ENCODE measurements at regions of chr22 and their contacts with region 1.

Region 1: GRCh38 chr22:41596776-41597634 is 7.4 kb upstream of the PMM1 start:
- H3K4me3 ChIP-seq: no peak overlapping the region
- H3K27ac ChIP-seq: peak overlapping the region; percentile 37; the same call in 1 of the 2 replicates
- H3K4me1 ChIP-seq: no peaks in the 10 kb centered on the region; the same call in 1 of the 2 replicates
- CTCF ChIP-seq: peak; percentile 90

Region 2: DNA sequence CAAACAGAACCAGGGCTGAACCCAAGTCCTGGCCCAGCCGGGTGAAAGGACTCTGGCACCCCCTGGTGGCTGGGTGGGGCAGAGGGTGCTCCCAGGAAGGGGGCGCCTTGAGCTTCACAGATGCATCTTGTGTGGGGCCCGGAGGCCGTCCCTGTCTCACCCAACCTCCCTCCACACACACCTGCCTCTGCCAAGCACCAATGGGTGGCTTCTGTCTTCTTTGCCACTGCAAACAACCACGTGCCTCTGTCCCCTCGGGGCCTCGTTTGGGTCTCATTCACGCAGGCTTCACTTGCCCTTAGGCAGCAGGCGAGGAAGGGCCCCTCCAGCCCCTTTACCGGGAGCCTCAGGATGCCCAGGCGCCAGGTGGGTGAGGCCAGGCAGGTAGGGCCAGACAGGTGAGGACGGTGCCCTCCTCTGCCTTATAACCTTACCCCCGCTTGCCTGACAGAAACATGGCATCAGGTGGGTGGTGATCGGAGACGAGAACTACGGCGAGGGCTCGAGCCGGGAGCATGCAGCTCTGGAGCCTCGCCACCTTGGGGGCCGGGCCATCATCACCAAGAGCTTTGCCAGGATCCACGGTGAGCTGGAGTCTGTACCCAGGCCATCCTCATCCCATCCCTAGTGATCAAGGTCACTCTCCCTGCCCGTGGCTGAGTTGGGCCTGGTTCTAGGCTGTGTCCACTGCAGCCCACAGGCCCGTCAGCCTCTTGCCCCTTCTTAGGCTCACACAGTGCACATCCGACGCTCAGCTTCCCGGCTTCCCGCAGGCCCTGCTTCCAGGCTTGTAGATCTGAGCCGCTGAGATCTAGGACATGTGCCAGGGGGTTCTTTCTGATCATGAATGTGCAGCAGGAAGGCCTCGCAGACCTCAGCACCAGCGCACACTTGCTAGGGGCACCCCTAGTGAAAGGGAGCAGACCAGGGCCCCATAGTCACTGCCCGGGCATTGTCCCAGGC is 69.9 kb before region 1 on chr22:
- CTCF ChIA-PET with region 1: interaction called, 16 read pairs
- POLR2A ChIA-PET with region 1: no interaction called
- H3K4me3 ChIP-seq: no peak overlapping the region
- H3K27ac ChIP-seq: no peak overlapping the region; the same call in 1 of the 2 replicates
- H3K4me1 ChIP-seq: no peaks in the 10 kb centered on the region
- CTCF ChIP-seq: peak; percentile 90

Region 3: DNA sequence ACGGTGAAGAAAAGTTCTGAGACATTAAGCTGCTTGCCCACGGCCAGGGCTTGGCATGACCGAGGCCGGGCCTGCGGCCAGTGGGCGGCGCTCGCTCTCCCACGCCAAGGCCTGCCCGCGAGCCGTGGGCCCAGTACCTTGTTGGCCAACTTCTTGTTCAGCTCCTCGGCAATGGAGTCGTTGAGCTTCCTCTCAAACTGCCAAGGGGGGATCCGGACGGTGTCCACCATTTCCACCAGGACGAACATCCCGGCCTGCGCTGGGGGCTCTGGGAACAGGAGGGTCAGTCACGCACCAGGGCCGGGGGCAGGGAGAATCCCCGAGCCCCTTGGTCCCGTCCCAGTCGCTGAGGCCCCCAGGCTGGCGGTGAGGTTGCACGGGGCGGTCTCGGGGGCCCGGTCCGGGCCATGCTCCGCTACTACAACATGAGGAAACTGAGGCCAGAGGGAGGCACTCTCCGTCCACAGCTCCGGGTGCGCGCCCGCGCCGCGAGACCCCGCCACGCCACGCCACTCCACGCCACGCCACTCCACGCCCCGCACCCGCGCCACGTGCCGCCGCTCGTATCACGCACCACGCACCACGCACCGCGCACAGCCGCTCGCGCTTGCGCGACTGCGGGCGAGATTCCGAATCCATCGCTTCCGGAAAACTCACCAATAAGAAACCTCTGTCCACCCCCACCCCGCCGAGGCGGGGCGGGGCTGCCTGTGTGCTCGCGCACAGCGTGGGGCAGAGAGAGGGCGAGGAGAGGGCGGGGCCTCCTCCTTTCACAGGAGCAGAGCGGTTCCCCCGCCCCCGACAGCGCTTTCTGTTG is 52.9 kb before region 1 on chr22 and contains the start of gene POLR3H:
- CTCF ChIA-PET with region 1: interaction called, 16 read pairs
- POLR2A ChIA-PET with region 1: interaction called, 4 read pairs
- H3K4me3 ChIP-seq: peak within 1 kb of the TSS; percentile 72
- H3K27ac ChIP-seq: peak within 1 kb of the TSS; percentile 93
- H3K4me1 ChIP-seq: peaks cover 8% of the 10 kb centered on the region
- CTCF ChIP-seq: peak; percentile 88

Region 4: DNA sequence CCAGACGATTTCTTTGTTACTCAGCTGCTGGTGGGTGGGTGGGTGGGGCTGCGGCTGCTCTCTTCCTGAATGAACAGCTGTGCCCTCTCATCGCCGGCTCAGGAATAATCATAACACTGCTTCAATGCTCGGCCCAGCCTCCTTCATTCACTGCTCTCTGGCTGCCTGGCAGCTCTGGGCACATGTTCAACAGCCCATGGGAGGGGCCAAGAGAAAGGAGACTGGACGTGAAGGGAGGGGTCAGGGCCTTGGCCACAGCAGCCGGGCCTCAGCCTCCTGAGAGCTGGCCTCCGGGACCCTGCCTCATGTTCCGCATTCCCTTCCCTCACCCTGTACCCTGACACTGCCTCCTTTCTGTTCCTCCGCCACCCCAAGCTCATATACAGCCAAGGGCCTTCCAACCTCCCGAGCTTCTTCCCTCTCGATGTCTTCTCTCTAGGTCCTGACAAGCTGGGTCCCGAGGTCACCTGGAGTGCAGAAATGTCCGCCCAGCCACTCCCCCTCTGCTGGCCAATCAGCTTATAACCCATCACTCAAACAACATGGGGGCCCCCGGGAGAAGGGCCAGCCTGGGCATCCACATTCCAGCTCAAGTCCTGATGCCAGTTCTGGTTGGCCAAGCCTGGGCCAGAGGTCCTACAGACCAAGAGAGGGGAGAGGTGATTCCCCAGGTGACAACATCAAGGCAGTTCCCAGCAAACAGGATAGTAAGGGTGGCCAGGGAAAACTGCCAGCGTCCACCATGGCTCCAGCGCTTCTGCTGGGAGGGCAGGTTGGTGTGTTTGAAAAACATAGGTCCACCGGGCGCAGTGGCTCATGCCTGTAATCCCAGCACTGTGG is 39.4 kb before region 1 on chr22:
- CTCF ChIA-PET with region 1: interaction called, 28 read pairs
- POLR2A ChIA-PET with region 1: no interaction called
- H3K4me3 ChIP-seq: no peak overlapping the region
- H3K27ac ChIP-seq: no peak overlapping the region
- H3K4me1 ChIP-seq: no peaks in the 10 kb centered on the region; the same call in 1 of the 2 replicates
- CTCF ChIP-seq: no peak

Region 5: GRCh38 chr22:41621099-41621910 is 24.3 kb after region 1 on chr22 and contains the start of gene XRCC6:
- CTCF ChIA-PET with region 1: interaction called, 16 read pairs
- POLR2A ChIA-PET with region 1: interaction called, 12 read pairs
- H3K4me3 ChIP-seq: peak within 1 kb of the TSS; percentile 98
- H3K27ac ChIP-seq: peak within 1 kb of the TSS; percentile 97
- H3K4me1 ChIP-seq: peaks cover 3% of the 10 kb centered on the region; the same call in 1 of the 2 replicates
- CTCF ChIP-seq: no peak